ENCODE measurements at regions of chr9 and their contacts with region 1.

Region 1: GRCh38 chr9:20622330-20623020 is at the start of gene MLLT3:
- DNase-seq: peak; percentile 96

Region 2: GRCh38 chr9:20684035-20684872 is 61.8 kb after region 1 on chr9 and contains the start of gene FOCAD:
- CTCF ChIA-PET with region 1: interaction called, 3 read pairs
- POLR2A ChIA-PET with region 1: interaction called, 12 read pairs
- DNase-seq: peak; percentile 96